ENCODE measurements at regions of chr12 and their contacts with region 1.

Region 1: DNA sequence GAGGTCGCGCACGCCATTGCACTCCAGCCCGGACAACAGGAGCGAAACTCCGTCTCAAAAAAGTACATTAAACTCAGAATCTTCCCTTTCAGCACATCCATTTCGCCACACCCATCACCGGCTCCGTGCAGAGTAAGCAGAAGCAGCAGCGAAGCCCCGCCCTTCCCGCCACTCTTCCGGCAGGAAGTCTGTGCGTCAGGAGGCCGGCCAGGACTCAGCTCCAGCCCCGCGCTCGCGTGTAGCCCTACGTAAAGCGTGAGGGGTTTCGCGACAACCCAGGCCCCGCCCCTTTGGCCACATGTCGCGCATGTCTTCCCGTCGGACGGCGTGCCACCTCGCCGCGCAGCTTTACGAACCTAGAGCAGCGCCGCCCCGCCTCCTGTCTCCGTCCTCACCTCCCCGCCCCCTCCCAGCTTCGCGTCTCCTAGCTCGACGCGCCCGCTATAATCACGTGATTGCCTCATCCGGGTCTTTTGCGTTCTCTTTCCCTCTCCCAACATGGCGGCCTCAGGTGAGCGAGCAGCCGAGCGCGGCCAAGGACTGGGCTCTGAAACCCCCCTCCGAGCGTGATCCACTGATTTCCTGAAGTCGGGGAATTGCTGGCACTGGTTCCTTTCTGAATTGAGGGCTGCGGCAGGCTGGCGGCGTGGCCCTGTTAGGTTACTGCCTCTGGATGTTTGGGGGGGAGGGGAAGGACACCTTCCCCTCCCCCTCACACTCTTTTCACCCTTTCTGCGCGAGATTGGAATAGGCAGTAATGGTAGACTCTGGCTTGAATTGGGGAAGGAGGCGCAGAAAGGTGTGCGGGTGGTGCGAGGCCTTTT is at the start of gene EIF4B:
- DNase-seq: peak; percentile 100
- H3K4me3 Mint-ChIP-seq: peak within 1 kb of the TSS; percentile 92
- H3K27ac Mint-ChIP-seq: peak within 1 kb of the TSS; percentile 90
- H3K4me1 Mint-ChIP-seq: peaks cover 33% of the 10 kb centered on the region
- H3K27me3 Mint-ChIP-seq: peaks cover 1% of the 10 kb centered on the region
- total RNA-seq, gene EIF4B: 474 and 503 TPM in 2 replicates

Region 2: GRCh38 chr12:53054112-53054833 is 48.1 kb after region 1 on chr12:
- intact Hi-C with region 1: loop called (anchors 1 kb)
- DNase-seq: peak; percentile 88
- H3K4me3 Mint-ChIP-seq: peak overlapping the region; percentile 97
- H3K27ac Mint-ChIP-seq: peak overlapping the region; percentile 89
- H3K4me1 Mint-ChIP-seq: peaks cover 10% of the 10 kb centered on the region
- H3K27me3 Mint-ChIP-seq: no peaks in the 10 kb centered on the region

Region 3: GRCh38 chr12:53180220-53180930 is 174.2 kb after region 1 on chr12 and contains the starts of genes CSAD and ZNF740:
- intact Hi-C with region 1: loop called (anchors 5 kb)
- DNase-seq: peak; percentile 97
- H3K4me3 Mint-ChIP-seq: peak within 1 kb of the TSS; percentile 91
- H3K27ac Mint-ChIP-seq: peak within 1 kb of the TSS; percentile 94
- H3K4me1 Mint-ChIP-seq: peaks cover 40% of the 10 kb centered on the region
- H3K27me3 Mint-ChIP-seq: no peaks in the 10 kb centered on the region
- total RNA-seq, gene CSAD: 20.2 TPM in 2 replicates
- total RNA-seq, gene ZNF740: 44.9 and 45.5 TPM in 2 replicates

Region 4: DNA sequence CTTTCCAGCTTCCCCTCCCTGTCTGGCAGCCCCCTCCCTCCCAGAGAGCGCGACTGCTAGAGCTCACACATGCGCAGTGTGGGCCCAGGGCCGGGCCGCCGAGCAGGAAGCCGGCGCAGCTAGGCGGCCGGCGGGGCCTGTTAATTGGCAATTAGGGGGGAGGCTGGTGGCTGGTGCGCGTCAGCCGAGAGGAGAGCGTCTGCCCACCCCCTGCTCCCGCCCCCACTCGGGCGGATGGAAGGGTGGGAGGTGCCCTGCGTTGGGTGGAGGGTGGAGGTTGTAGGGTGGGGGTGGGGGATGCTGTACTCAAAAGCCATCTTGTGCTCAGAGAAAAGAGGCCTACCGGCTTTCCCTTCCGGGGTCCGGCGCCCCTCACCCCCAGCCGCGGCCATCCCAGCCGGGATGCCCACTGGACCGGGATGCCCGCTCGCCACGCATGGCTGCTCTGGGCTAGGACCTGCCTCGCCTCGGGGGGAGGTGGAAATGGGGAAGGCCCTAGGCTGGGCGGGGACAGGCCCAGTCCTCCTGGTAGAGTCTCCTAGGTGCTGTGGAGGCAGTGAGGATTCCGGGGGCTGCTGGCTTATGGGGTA is 1011.8 kb after region 1 on chr12:
- intact Hi-C with region 1: loop called (anchors 10 kb)
- DNase-seq: peak; percentile 67
- H3K4me3 Mint-ChIP-seq: peak overlapping the region; percentile 81
- H3K27ac Mint-ChIP-seq: peak overlapping the region; percentile 18
- H3K4me1 Mint-ChIP-seq: peaks cover 17% of the 10 kb centered on the region
- H3K27me3 Mint-ChIP-seq: peaks cover 75% of the 10 kb centered on the region